GM10248 (cell line): ENCODE measurements at regions of chr2 and their contacts with region 1.

Region 1: GRCh38 chr2:217886720-217887309 is 116.0 kb downstream of the TNS1 start:
- DNase-seq: peak; percentile 80
- CTCF ChIP-seq: peak; percentile 66

Region 2: DNA sequence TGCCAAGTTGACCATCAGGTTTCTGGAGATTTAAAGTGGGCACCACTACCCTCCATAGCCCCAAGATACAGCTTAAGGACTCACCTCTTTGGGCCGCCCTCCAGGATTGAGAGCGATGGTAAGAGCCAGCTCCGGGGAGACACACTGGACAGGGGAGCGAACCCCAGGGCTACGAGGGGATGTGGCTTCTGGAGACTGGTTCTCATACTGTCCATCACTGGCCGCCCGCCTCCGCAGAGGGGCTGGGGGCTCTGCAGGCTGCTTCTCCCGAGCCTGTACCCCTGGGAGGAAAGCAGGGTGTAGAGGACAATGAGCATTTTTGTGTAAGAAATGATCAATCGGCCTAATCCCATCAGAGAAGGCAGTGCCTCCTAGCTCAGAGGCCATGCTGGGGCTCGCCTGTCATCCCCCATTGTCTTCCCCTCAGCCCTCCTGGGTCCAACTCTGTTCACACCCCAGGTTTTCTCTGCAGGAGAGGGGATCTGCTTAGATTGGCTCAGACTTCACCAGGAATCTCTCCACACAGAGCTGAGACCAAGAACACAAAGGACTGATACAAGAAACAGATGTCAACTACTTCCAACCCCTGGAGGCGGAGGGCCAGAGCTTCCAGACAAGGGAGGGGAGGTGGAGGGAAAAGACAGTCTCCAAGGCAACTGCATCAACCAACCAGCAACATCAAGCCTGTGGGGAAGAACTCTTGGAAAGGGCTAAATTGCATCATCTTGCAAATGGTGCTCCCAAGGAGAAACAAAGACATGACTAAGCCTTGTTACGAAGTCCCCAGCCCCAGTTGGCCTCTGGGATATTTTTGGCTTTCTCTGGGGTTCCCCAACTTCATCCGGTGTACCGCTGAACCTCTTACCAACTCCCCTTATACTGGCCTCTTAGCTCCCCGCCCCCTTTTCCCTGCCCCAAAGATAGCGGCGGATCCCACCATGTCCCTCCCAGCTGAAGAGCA is 50.6 kb before region 1 on chr2:
- CTCF ChIA-PET with region 1: interaction called, 10 read pairs
- POLR2A ChIA-PET with region 1: no interaction called
- DNase-seq: no peak
- CTCF ChIP-seq: no peak

Region 3: DNA sequence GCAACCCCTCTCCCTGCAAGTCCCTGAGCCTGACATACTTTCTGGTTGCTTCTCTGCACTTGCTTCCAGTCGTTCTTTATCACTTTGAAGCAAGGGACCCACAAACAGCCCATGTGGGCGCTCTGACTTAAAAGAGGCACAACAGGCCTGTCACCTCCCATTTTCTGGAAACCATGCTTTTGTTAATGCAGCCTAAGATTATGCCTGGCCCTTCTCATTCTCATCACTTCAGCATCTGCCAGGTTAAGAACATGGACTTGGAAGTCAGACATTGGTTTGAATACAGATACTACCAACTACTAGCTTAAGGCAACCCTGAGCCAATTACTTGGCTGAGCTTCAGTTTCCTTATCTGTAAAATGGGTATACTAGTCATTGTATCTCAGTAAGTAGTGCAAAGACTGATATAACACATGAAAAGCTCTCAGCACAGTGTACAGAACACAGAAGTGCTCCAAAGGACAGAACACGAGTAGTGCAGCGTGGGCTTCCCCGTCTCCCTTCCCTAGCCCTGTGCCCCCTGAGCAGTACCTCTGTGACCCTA is 25.4 kb before region 1 on chr2:
- CTCF ChIA-PET with region 1: interaction called, 11 read pairs
- POLR2A ChIA-PET with region 1: no interaction called
- DNase-seq: no peak
- CTCF ChIP-seq: no peak

Region 4: DNA sequence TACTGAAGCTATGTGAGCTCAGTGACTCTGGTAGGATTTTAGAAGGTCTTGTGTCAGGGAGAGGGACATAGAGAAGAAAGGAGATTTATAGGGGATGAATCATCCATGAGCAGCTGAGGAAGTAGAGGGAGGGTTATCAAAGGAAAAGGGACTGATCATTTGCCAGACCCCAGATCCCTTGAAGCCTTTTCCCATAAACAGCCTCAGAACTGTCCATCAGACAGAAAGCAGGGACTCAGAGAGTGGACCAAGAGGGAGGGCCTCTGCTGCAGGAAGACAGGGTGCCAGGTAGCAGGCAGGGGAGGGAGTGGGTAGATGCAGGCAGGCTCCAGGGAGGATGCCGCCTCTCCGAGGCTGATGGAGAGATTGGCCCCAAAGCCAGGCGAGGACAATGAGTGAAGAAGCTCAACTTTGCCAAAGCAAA is 17.9 kb before region 1 on chr2:
- CTCF ChIA-PET with region 1: interaction called, 16 read pairs
- POLR2A ChIA-PET with region 1: no interaction called
- DNase-seq: no peak
- CTCF ChIP-seq: no peak

Region 5: DNA sequence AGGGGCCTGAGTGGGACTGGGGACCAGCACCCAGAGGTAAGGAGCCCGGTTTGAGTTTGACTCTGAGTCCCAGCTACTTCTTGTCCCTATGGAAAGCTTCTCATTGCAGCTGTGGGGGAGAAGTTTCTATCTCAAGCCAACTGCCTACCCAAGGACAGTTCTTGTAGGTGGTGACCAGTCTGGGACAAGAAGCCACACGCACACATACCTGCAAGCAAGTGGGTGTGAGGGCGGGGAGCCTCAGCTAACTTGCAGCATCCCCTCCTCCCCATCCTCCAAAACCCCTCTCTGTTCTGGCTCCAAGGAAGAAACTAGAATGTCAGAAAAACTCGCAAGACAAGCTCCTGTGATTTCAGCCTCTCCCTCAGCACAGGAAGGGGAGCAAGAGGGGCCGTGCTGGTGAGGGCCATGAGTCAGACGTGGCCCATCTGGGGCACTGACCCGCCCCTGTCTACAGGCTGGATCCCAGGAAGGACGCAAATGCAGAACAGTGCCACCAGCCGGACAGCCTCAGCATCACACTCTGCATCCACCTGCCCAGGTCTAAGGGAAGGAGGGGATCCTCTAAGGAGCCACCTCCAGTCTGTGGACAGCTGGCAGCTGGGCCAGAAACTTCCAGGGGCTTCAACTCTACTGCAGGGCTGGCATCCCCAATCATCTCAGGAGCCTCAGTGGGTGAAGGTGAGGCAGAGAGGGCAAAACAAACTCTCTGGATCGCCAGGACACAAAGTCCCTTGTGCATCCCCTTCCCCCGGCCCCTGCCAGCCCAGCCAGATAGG is 12.6 kb after region 1 on chr2:
- CTCF ChIA-PET with region 1: interaction called, 12 read pairs
- POLR2A ChIA-PET with region 1: no interaction called
- DNase-seq: peak; percentile 75
- CTCF ChIP-seq: peak; percentile 31